Activated CD4-positive, alpha-beta memory T cell treated with anti-CD3 and anti-CD28 coated beads, Interleukin-2, amount 10 ng/mL, durations not matched to agents 7 days and 5 days (primary cell): ENCODE measurements at regions of chr10 and their contacts with region 1.

Region 1: DNA sequence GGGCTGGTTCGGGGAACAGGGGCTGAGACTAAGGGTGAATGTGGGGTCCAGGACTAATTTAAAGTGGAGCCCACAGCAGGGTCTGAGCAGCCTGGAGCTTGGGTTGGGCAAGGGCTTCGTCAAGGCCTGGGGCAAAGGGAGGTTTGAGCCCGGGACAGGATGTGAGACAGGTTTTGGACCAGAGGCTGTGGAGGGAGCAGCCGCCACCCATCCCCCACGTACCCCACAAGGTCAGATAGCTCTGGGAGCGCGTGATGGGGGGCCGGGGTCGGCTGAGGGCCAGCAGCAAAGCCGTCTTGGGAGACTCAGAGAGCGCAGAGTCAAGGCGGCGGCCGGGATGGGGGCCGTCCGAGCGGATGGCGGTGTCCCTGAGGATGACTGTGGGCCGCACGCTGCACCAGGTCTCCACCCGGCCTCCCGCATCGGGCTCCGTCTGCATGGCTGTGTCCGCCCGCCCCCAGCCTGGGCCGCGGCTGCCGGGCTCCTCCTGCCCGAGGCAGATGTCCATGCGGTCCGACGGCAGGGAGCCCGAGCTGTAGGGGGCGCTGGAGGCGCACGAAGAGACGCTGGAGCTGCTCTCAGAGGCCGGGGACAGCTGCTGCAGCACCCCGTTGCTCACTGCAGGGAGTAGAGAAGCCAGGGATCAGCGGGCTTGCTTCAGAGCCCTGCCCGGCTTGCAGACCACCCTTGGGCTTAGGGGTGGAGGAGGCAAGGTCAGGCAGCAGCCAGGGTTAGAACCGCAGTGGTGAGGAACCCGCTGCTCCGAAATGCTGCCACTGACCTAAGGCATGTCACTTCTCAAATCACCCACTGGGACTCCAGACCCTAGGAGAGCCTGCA is 12.1 kb downstream of the PDZD7 start:
- DNase-seq: peak; percentile 84
- H3K4me3 Mint-ChIP-seq: no peak overlapping the region
- H3K27ac Mint-ChIP-seq: no peak overlapping the region
- H3K4me1 Mint-ChIP-seq: peaks cover 13% of the 10 kb centered on the region
- H3K27me3 Mint-ChIP-seq: peaks cover 37% of the 10 kb centered on the region

Region 2: GRCh38 chr10:100998991-100999741 is 19.7 kb before region 1 on chr10:
- CTCF ChIA-PET with region 1: interaction called, 186 read pairs
- POLR2A ChIA-PET with region 1: interaction called, 17 read pairs
- DNase-seq: peak; percentile 78
- H3K4me3 Mint-ChIP-seq: peak overlapping the region; percentile 77
- H3K27ac Mint-ChIP-seq: peak overlapping the region; percentile 66
- H3K4me1 Mint-ChIP-seq: peaks cover 28% of the 10 kb centered on the region
- H3K27me3 Mint-ChIP-seq: peaks cover 3% of the 10 kb centered on the region

Region 3: GRCh38 chr10:101031128-101031795 is 12.4 kb after region 1 on chr10 and contains the starts of genes PDZD7 and SFXN3:
- CTCF ChIA-PET with region 1: interaction called, 120 read pairs
- POLR2A ChIA-PET with region 1: interaction called, 25 read pairs
- DNase-seq: peak; percentile 97
- H3K4me3 Mint-ChIP-seq: peak within 1 kb of the TSS; percentile 91
- H3K27ac Mint-ChIP-seq: peak within 1 kb of the TSS; percentile 96
- H3K4me1 Mint-ChIP-seq: peaks cover 27% of the 10 kb centered on the region
- H3K27me3 Mint-ChIP-seq: peaks cover 14% of the 10 kb centered on the region
- total RNA-seq, gene PDZD7: 1.1 to 1.9 TPM
- total RNA-seq, gene SFXN3: 91.4 to 95.0 TPM

Region 4: DNA sequence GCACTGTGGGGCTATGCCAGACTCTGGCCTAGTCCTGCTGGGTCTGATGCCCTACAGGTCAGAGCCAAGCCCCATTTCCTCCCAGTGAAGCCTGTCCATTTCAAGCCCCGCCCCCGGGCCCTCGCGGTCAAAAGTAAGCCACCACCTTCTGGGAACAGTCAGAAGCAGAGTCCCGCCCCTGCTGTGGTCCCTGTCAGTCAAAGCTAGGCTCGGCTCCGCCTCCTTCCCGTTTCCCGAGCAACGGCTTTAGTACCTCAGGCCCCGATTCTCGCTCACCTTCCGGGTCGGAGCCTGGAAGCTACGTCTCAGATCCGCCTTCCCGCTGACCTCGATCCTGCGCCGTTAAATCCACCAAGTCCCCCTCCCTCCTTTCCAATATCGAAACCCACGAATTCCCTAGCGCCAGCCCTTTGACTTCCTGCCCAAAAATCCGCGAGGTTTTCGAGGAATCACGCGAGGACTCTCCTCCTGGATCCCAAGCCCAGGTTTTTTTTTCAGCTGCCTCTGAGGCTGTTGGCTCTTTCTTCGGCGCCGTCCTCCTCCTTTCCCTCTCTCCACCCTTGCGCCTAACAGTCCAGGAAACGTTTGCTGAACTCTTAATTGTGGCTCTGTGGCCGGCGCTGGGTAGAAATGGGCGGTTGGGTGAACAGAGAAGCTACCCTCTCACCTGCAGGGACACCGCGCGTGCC is 24.0 kb after region 1 on chr10:
- CTCF ChIA-PET with region 1: interaction called, 48 read pairs
- POLR2A ChIA-PET with region 1: interaction called, 3 read pairs
- DNase-seq: peak; percentile 93
- H3K4me3 Mint-ChIP-seq: peak overlapping the region; percentile 96
- H3K27ac Mint-ChIP-seq: peak overlapping the region; percentile 80
- H3K4me1 Mint-ChIP-seq: peaks cover 27% of the 10 kb centered on the region
- H3K27me3 Mint-ChIP-seq: peaks cover 27% of the 10 kb centered on the region

Region 5: GRCh38 chr10:101050208-101051069 is 31.6 kb after region 1 on chr10:
- CTCF ChIA-PET with region 1: interaction called, 23 read pairs
- POLR2A ChIA-PET with region 1: no interaction called
- DNase-seq: peak; percentile 83
- H3K4me3 Mint-ChIP-seq: no peak overlapping the region
- H3K27ac Mint-ChIP-seq: no peak overlapping the region
- H3K4me1 Mint-ChIP-seq: peaks cover 32% of the 10 kb centered on the region
- H3K27me3 Mint-ChIP-seq: peaks cover 41% of the 10 kb centered on the region

Region 6: GRCh38 chr10:101060036-101060950 is 41.5 kb after region 1 on chr10:
- CTCF ChIA-PET with region 1: interaction called, 16 read pairs
- POLR2A ChIA-PET with region 1: interaction called, 3 read pairs
- DNase-seq: peak; percentile 91
- H3K4me3 Mint-ChIP-seq: peak overlapping the region; percentile 84
- H3K27ac Mint-ChIP-seq: peak overlapping the region; percentile 83
- H3K4me1 Mint-ChIP-seq: peaks cover 48% of the 10 kb centered on the region
- H3K27me3 Mint-ChIP-seq: peaks cover 23% of the 10 kb centered on the region

Region 7: DNA sequence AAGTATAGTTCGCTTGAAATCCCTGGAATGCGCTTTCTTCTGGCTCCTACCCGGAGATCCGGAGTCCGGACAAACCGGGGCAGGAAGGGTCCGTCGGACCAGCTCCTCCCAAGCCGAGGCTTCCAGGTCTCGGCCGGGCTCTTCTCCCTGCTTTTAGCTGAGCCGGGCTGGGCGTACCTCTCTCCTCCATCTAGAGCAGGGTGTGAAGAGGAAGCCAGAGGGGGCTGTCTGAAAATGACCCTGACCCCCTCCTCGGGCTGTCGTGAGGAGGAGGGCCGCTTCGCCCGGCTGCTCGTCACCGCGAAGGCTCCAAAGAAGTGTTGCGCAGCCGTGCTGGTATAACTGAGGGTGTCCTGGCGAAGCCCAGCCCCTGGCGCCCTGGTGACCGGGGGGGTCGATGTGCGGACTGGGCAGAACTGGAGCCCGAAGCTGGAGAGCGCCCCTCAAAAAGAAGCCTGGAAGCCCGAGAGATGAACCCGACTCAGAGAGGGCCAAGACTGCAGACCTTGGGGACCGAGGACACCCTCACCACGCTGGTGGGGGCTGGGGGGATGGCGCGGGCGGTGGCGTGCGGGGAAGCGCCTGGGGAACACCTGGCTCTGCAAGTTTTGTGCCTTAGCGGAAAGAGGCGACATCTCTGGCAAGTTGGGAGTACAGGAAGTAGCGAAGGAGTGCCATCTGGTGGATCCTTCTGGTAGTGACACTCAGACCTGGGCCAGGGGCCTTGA is 48.7 kb after region 1 on chr10:
- CTCF ChIA-PET with region 1: interaction called, 16 read pairs
- POLR2A ChIA-PET with region 1: interaction called, 3 read pairs
- DNase-seq: peak; percentile 82
- H3K4me3 Mint-ChIP-seq: peak overlapping the region; percentile 77
- H3K27ac Mint-ChIP-seq: no peak overlapping the region
- H3K4me1 Mint-ChIP-seq: peaks cover 24% of the 10 kb centered on the region
- H3K27me3 Mint-ChIP-seq: peaks cover 51% of the 10 kb centered on the region